ENCODE measurements at regions of chr19 and their contacts with region 1.

Region 1: GRCh38 chr19:18879579-18880373 is 16.2 kb downstream of the CERS1 start:
- DNase-seq: no peak
- H3K4me3 ChIP-seq: no peak overlapping the region
- CTCF ChIP-seq: no peak

Region 2: GRCh38 chr19:18865973-18866799 is 13.6 kb before region 1 on chr19:
- CTCF ChIA-PET with region 1: interaction called, 101 read pairs
- POLR2A ChIA-PET with region 1: no interaction called
- DNase-seq: no peak
- H3K4me3 ChIP-seq: no peak overlapping the region
- CTCF ChIP-seq: peak; percentile 94